H1 (cell line): ENCODE measurements at regions of chr5 and their contacts with region 1.

Region 1: DNA sequence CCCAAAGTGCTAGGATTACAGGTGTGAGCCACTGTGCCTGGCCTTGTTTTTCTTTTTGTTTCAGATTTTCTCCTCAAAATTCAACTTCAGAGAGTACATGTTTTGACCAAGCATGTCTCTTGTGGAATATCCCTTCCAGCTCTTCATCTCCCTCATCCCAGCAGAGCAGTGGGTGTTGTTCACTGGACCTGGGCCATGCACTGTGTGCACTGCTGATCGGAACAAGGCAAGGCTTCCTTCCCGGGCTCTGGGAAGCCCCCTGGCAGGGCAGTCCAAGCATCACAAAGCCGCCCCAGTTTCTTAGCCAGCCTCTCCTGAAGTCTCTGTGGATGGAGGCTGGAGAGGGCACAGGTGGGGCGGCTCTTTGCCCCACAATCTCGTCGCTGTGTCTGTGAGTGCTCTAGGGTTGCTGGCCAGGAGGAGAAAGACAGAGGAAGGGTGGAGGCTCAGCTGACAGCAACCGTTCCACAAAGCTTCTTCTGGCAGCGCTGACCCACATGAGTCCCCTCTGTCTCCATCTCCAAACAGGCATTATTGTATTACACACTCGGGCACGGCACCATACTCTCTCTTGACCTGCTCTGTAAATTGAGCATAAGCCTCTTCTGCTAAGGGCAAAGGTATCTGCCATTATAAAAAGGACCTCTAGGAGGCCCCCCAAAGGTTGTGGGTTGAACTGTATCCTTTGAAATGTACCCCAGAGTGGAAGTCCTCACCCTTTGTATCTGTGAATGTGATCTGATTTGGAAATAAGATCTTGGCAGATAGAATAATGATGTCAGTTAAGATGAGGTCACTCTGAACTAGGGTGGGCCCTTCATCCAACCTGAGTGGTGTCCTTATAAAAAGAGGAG is 89.6 kb downstream of the TARS1 start:
- DNase-seq: peak in 1 of 2 experiments; percentile 49
- H3K4me3 ChIP-seq: no peak overlapping the region
- H3K27ac ChIP-seq: no peak overlapping the region
- H3K4me1 ChIP-seq: no peaks in the 10 kb centered on the region
- H3K27me3 ChIP-seq: no peaks in the 10 kb centered on the region
- CTCF ChIP-seq: peak in 2 of 3 experiments; percentile 35 to 36; a peak in 2 of 4 replicates
- EP300 ChIP-seq: no peak
- POLR2A ChIP-seq: no peak
- RAD21 ChIP-seq: peak; percentile 22 to 55; a peak in 3 of 4 replicates

Region 2: DNA sequence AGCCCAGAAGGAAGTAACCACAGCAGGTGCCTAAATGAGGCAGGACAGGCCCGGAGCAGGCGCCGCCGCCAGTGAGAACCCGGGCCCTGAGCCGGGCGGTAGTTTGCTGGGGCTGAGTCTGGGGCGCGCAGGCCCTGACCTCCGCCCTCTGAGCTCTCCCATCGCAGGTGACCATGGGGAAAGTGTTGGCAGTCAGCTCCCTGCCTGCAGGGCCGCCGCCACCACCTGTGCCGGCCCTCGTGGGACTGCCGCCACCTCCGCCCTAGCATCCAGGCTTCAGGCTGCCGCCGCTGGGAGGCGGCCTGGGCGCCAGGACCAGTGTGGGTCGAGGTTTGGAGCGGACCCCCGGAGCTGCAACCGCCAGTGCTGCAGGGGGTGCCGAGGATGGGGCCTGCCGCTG is 28.5 kb before region 1 on chr5:
- CTCF ChIA-PET with region 1: no interaction called
- POLR2A ChIA-PET with region 1: no interaction called
- DNase-seq: no peak
- H3K4me3 ChIP-seq: no peak overlapping the region
- H3K27ac ChIP-seq: no peak overlapping the region
- H3K4me1 ChIP-seq: no peaks in the 10 kb centered on the region
- H3K27me3 ChIP-seq: no peaks in the 10 kb centered on the region
- CTCF ChIP-seq: no peak
- EP300 ChIP-seq: no peak
- POLR2A ChIP-seq: no peak
- RAD21 ChIP-seq: no peak

Region 3: DNA sequence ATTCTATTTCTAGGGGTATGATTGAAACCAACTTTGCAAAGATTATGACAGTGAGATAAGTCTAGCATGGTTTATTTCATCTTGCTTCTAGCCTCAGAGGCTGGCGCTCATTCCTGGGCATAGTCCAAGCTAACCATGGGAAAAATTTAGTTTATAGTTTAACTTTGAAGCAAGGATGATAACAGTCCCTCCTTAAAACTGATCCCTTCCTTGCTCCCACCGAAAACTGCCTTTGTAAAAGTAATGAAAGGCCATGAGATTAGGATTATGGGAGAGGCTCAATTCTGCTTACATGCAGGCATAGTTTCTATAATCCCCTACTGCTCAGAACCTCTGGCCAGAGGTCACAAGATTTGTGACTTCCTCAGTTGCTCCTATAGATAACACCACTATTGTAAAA is 14.0 kb before region 1 on chr5:
- CTCF ChIA-PET with region 1: interaction called, 19 read pairs
- POLR2A ChIA-PET with region 1: interaction called, 3 read pairs
- DNase-seq: no peak
- H3K4me3 ChIP-seq: no peak overlapping the region
- H3K27ac ChIP-seq: no peak overlapping the region
- H3K4me1 ChIP-seq: no peaks in the 10 kb centered on the region
- H3K27me3 ChIP-seq: no peaks in the 10 kb centered on the region
- CTCF ChIP-seq: no peak
- EP300 ChIP-seq: no peak
- POLR2A ChIP-seq: no peak
- RAD21 ChIP-seq: no peak

Region 4: GRCh38 chr5:33549982-33550567 is 19.7 kb after region 1 on chr5:
- CTCF ChIA-PET with region 1: interaction called, 14 read pairs
- POLR2A ChIA-PET with region 1: no interaction called
- DNase-seq: no peak
- H3K4me3 ChIP-seq: no peak overlapping the region
- H3K27ac ChIP-seq: no peak overlapping the region
- H3K4me1 ChIP-seq: 0 out of 7 replicates have a peak, but pooled peaks cover 0 to 2% (median 0%) of the 10 kb centered on the region in 4 experiments
- H3K27me3 ChIP-seq: no peaks in the 10 kb centered on the region
- CTCF ChIP-seq: no peak
- EP300 ChIP-seq: no peak
- POLR2A ChIP-seq: no peak
- RAD21 ChIP-seq: no peak